ENCODE measurements at regions of chr11 and their contacts with region 1.

Region 1: GRCh38 chr11:61639816-61640443 is 40.3 kb upstream of the DAGLA start:
- DNase-seq: no peak
- H3K4me3 Mint-ChIP-seq: no peak overlapping the region
- H3K27ac Mint-ChIP-seq: no peak overlapping the region
- H3K4me1 Mint-ChIP-seq: no peaks in the 10 kb centered on the region
- H3K27me3 Mint-ChIP-seq: peaks cover 2% of the 10 kb centered on the region

Region 2: GRCh38 chr11:61509043-61510029 is 130.6 kb before region 1 on chr11:
- intact Hi-C with region 1: no loop called
- DNase-seq: peak; percentile 70
- H3K4me3 Mint-ChIP-seq: peak overlapping the region; percentile 19
- H3K27ac Mint-ChIP-seq: no peak overlapping the region
- H3K4me1 Mint-ChIP-seq: peaks cover 6% of the 10 kb centered on the region
- H3K27me3 Mint-ChIP-seq: peaks cover 41% of the 10 kb centered on the region

Region 3: GRCh38 chr11:61532139-61533038 is 107.5 kb before region 1 on chr11:
- intact Hi-C with region 1: loop called (anchors 1 kb)
- DNase-seq: no peak
- H3K4me3 Mint-ChIP-seq: no peak overlapping the region
- H3K27ac Mint-ChIP-seq: no peak overlapping the region
- H3K4me1 Mint-ChIP-seq: no peaks in the 10 kb centered on the region
- H3K27me3 Mint-ChIP-seq: peaks cover 2% of the 10 kb centered on the region